Ovary (tissue), 10 donors: ENCODE measurements at regions of chr1 and their contacts with region 1.

Region 1: GRCh38 chr1:212608209-212608955 is at the start of gene ATF3:
- DNase-seq: peak; percentile 99 to 100 (median 100)
- H3K4me3 ChIP-seq: peak within 1 kb of the TSS; percentile 87
- H3K27ac ChIP-seq: peak within 1 kb of the TSS; percentile 85 to 90
- H3K4me1 ChIP-seq: peaks cover 10% of the 10 kb centered on the region
- H3K27me3 ChIP-seq: no peaks in the 10 kb centered on the region
- CTCF ChIP-seq: peak in 2 of 3 donors; percentile 32 to 43
- EP300 ChIP-seq: peak; percentile 57
- POLR2A ChIP-seq: peak; percentile 100
- total RNA-seq, gene ATF3: 2.9 to 132 (median 19.4) TPM

Region 2: DNA sequence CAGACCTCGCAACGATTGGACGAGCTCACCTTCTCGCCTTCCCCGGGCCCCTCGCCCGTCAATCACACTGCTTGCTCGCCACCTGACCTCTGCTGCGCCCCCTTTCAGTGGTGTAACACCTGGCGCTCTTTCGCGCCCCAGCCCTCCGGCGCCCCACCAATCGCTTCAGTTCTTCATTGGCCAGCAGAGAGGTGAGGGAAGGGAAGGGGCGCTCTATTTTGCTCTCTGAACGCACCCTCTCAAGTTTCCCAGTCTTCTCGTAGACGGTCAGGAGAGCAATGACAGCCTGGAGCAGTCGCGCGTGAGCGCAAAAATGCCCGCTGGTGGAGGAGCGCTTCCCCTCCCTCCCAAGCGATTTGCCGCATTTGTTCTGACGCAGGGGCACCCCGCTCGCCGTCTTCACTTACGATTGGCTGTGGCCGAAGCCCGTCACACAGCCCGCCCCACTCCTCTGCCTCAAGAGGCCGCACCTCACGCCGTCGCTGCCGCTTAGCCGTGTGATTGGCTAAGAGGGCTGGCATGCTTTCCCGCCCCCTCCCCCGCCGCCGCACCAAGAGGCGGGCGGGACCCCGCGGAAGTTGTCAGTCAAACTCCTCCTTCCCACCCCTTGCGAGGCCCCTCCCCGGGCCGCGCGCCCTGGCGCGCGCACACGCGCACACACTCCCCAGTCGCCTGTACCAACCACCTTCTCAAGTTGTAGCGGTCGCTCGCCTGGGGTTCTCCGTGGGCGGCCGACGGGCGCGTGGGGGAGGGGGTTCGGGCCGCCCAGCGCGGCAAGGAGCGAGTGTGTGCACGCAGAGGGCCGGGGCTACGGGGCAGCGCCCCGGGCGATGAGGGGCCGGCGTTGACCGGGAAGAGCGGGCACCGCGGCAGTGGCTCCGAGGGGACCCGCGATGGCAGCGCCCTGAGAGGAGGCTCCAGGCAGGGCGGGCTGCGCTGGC is 323.4 kb before region 1 on chr1 and contains the start of gene PPP2R5A:
- intact Hi-C with region 1: loop called in 1 of 4 experiments (anchors 10 kb)
- DNase-seq: peak; percentile 98 to 99 (median 99)
- H3K4me3 ChIP-seq: peak within 1 kb of the TSS; percentile 91
- H3K27ac ChIP-seq: peak within 1 kb of the TSS; percentile 93 to 94
- H3K4me1 ChIP-seq: peaks cover 4% of the 10 kb centered on the region
- H3K27me3 ChIP-seq: no peaks in the 10 kb centered on the region
- CTCF ChIP-seq: no peak
- EP300 ChIP-seq: peak; percentile 51
- POLR2A ChIP-seq: peak; percentile 84
- total RNA-seq, gene PPP2R5A: 17.4 to 20.9 (median 19.0) TPM

Region 3: DNA sequence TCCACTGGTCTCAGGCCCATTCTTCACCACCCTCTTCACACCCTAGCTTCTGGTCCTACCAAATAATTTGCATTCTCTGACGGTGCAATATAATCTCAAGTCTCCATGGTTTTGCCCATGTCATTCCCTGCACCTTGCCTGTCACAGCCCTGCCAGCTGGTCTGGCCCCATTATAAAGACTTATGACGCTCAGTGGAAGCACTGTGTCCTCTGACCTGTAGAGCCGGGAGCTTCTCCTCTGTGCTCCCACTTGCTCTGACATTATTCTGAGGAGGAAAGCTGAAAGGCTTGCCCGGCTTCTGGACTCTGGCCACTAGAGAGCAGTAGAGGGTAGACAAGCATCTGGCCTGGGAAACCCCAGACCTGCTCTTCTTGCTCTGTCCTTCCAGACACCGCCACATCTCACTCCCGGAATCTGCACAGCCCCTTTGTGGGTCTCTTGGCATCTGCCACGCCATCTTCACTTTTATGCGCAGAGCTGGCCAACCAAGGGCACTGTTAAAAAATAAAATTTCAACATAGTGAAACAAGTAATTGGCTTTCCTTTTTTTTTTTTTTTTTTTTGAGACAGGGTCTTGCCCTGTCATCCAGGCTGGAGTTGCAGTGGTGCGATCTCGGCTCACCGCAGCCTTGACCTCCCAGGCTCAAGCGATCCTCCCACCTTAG is 131.2 kb before region 1 on chr1:
- intact Hi-C with region 1: loop called in 2 of 4 experiments (anchors 10 kb)
- DNase-seq: peak; percentile 56 to 78 (median 71)
- H3K4me3 ChIP-seq: no peak overlapping the region
- H3K27ac ChIP-seq: no peak overlapping the region
- H3K4me1 ChIP-seq: no peaks in the 10 kb centered on the region
- H3K27me3 ChIP-seq: no peaks in the 10 kb centered on the region
- CTCF ChIP-seq: peak; percentile 57 to 64 (median 60)
- EP300 ChIP-seq: no peak
- POLR2A ChIP-seq: no peak

Region 4: GRCh38 chr1:212561501-212561931 is 46.9 kb before region 1 on chr1:
- intact Hi-C with region 1: loop called in 1 of 4 experiments (anchors 5 kb)
- DNase-seq: no peak
- H3K4me3 ChIP-seq: no peak overlapping the region
- H3K27ac ChIP-seq: no peak overlapping the region
- H3K4me1 ChIP-seq: peaks cover 3% of the 10 kb centered on the region
- H3K27me3 ChIP-seq: no peaks in the 10 kb centered on the region
- CTCF ChIP-seq: no peak
- EP300 ChIP-seq: no peak
- POLR2A ChIP-seq: no peak